CD8-positive, alpha-beta memory T cell (primary cell): ENCODE measurements at regions of chr2 and their contacts with region 1.

Region 1: GRCh38 chr2:173040729-173041128 is 34.9 kb upstream of the MAP3K20 start:
- DNase-seq: no peak
- H3K4me3 ChIP-seq: no peak overlapping the region
- H3K4me3 Mint-ChIP-seq: no peak overlapping the region
- H3K27ac ChIP-seq: no peak overlapping the region
- H3K27ac Mint-ChIP-seq: no peak overlapping the region
- H3K4me1 ChIP-seq: no peaks in the 10 kb centered on the region
- H3K4me1 Mint-ChIP-seq: no peaks in the 10 kb centered on the region
- H3K27me3 ChIP-seq: no peaks in the 10 kb centered on the region
- H3K27me3 Mint-ChIP-seq: peaks cover 0 to 1% of the 10 kb centered on the region in 2 donors

Region 2: DNA sequence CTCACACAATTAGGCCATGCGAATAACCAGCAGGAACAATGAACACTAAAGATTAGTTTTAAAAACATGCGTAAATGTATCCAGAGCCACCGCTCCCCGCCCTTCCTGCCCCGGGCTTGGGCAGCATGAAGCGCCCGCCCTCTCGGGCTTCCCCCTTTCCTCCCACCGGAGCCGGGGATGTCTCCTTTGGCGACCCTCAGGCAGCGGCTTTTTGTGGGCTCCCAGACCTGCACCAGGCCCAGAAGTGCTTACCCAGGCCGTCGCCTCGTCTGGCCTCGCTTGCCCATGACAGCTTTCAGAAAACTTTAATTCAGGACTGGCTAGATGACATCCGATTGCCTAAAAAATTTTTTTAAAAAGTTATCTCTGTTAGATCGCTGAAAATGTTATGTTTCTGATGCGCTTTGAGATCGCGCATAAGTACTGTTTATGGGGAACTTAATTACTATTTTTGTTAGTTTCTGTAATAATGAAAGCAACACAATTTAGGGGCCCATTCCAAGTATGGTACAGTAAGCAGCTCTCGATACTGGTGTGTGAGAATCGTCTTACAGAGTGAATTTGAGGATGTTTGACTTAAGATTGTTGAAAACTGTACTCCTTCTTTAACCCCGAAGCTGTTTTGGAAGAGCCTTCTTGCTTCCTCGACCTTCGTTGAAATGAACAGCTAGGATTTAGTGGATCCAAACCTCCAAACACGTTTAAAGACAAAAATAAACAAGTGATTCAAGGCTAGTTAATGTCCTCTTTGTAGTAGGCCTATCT is 36.0 kb after region 1 on chr2:
- CTCF ChIA-PET with region 1: no interaction called
- POLR2A ChIA-PET with region 1: interaction called, 16 read pairs
- DNase-seq: peak in 3 of 5 donors; percentile 2 to 46 (median 3)
- H3K4me3 ChIP-seq: peak overlapping the region; percentile 60
- H3K4me3 Mint-ChIP-seq: peak overlapping the region; percentile 77 to 94 (median 88)
- H3K27ac ChIP-seq: peak overlapping the region; percentile 62
- H3K27ac Mint-ChIP-seq: peak overlapping the region in 2 of 8 donors; percentile 18 to 80
- H3K4me1 ChIP-seq: no peaks in the 10 kb centered on the region
- H3K4me1 Mint-ChIP-seq: peaks cover 8 to 28% (median 9%) of the 10 kb centered on the region in 3 donors
- H3K27me3 ChIP-seq: no peaks in the 10 kb centered on the region
- H3K27me3 Mint-ChIP-seq: peaks cover 11 to 22% of the 10 kb centered on the region in 2 donors